Activated CD8-positive, alpha-beta T cell treated with anti-CD3 and anti-CD28 coated beads for 36 hours (primary cell): ENCODE measurements at regions of chr9 and their contacts with region 1.

Region 1: DNA sequence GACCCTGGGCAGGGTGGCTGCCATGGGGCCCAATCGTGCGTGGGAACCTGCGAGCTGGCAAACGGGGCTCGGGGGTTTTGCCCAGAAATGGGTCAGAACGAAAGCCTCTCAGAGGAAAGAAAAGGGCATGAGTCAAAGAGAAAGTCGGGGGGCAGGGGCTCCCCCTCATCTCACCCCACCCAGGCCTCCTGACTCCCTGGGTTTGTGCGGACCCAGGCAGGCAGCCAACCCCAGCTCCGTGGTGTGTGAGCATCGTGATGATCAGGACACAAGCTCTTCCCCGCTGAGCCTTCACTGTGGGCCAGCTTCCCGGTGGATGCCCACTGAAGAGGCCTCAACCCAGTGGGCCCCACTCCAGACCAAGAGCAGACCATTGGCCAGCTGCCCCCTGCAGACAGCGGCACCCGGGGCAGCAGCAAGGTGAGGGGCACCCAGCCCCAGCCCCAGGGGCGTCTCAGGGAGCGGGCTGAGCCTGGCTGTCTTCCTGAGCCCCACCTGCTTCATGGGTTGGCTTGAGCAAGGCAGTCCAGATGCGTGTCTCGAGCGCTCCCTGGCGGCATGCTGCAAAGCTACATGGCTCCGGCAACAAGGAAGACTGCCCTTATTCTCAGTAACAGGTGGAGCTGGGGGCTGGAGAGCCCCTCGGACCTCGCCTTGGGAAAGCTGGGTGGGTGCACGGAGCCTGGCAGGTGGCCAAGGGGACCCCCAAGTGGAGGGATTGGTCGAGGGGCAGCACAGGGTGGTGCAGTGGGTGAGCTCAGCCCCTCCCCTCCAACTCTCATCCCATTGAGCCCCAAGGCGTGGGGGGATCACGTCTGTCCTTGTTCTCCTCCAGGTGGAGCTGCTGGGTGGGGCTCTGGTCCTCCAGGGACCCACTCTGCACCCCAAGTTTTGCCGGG is 3.2 kb upstream of the FUT7 start:
- DNase-seq: peak; percentile 91
- ATAC-seq: peak; percentile 89
- H3K4me3 Mint-ChIP-seq: peak overlapping the region; percentile 47
- H3K27ac Mint-ChIP-seq: peak overlapping the region; percentile 85
- H3K4me1 Mint-ChIP-seq: peaks cover 34% of the 10 kb centered on the region
- H3K27me3 Mint-ChIP-seq: no peaks in the 10 kb centered on the region
- CTCF ChIP-seq: peak; percentile 86

Region 2: GRCh38 chr9:136790927-136791641 is 244.0 kb before region 1 on chr9 and contains the start of gene TMEM141:
- CTCF ChIA-PET with region 1: interaction called, 28 read pairs
- POLR2A ChIA-PET with region 1: interaction called, 3 read pairs
- intact Hi-C with region 1: loop called (anchors 5 kb)
- DNase-seq: peak; percentile 100
- ATAC-seq: peak; percentile 91
- H3K4me3 Mint-ChIP-seq: peak within 1 kb of the TSS; percentile 82
- H3K27ac Mint-ChIP-seq: peak within 1 kb of the TSS; percentile 86
- H3K4me1 Mint-ChIP-seq: peaks cover 31% of the 10 kb centered on the region
- H3K27me3 Mint-ChIP-seq: peaks cover 10% of the 10 kb centered on the region
- CTCF ChIP-seq: no peak
- total RNA-seq, gene TMEM141: 50.6 to 51.1 TPM

Region 3: GRCh38 chr9:136944519-136945279 is 90.4 kb before region 1 on chr9 and contains the starts of genes C8G and FBXW5:
- CTCF ChIA-PET with region 1: interaction called, 82 read pairs
- POLR2A ChIA-PET with region 1: interaction called, 7 read pairs
- intact Hi-C with region 1: no loop called
- DNase-seq: peak; percentile 93
- ATAC-seq: peak; percentile 89
- H3K4me3 Mint-ChIP-seq: peak within 1 kb of the TSS; percentile 77
- H3K27ac Mint-ChIP-seq: peak within 1 kb of the TSS; percentile 83
- H3K4me1 Mint-ChIP-seq: peaks cover 14% of the 10 kb centered on the region
- H3K27me3 Mint-ChIP-seq: no peaks in the 10 kb centered on the region
- CTCF ChIP-seq: peak; percentile 96
- total RNA-seq, gene C8G: 0.83 TPM in 1 of 2 experiments, not detected in the other
- total RNA-seq, gene FBXW5: 53.4 to 54.0 TPM

Region 4: GRCh38 chr9:136991993-136992818 is 42.9 kb before region 1 on chr9 and contains the start of gene PAXX:
- CTCF ChIA-PET with region 1: interaction called, 48 read pairs
- POLR2A ChIA-PET with region 1: interaction called, 4 read pairs
- intact Hi-C with region 1: no loop called
- DNase-seq: peak; percentile 96
- ATAC-seq: peak; percentile 92
- H3K4me3 Mint-ChIP-seq: peak within 1 kb of the TSS; percentile 86
- H3K27ac Mint-ChIP-seq: peak within 1 kb of the TSS; percentile 88
- H3K4me1 Mint-ChIP-seq: peaks cover 22% of the 10 kb centered on the region
- H3K27me3 Mint-ChIP-seq: no peaks in the 10 kb centered on the region
- CTCF ChIP-seq: no peak
- total RNA-seq, gene PAXX: 60.5 to 61.8 TPM

Region 5: DNA sequence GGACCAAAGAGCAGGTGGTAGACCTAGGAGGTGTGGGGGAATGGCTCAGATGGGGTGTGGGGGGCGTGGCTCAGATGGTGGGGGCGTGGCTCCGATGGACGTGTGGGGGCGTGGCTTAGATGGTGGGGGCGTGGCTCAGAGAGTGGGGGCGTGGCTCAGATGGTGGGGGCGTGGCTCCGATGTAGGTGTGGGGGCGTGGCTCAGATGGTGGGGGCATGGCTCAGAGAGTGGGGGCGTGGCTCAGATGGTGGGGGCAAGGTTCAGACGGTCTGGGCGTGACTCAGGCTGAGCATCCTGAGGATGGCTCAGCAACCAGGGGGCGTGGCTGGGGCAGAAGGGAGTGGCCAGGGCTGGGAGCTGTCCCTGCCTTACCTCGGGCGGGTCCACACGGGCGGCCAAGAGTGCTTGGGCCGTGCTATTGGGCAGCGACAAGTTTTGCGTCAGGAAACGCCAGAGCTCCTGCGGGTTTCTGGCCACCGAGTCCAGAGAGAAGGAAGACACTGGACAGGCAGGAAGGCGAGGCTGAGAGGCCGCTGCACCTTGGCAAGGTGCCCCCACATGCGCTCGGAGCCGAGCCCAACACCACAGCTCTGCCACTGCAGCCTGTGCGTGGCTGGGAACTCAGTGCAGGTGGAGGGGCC is 13.0 kb before region 1 on chr9:
- CTCF ChIA-PET with region 1: interaction called, 42 read pairs
- POLR2A ChIA-PET with region 1: interaction called, 9 read pairs
- intact Hi-C with region 1: no loop called
- DNase-seq: peak; percentile 91
- ATAC-seq: peak; percentile 95
- H3K4me3 Mint-ChIP-seq: no peak overlapping the region
- H3K27ac Mint-ChIP-seq: no peak overlapping the region
- H3K4me1 Mint-ChIP-seq: peaks cover 4% of the 10 kb centered on the region
- H3K27me3 Mint-ChIP-seq: no peaks in the 10 kb centered on the region
- CTCF ChIP-seq: no peak

Region 6: DNA sequence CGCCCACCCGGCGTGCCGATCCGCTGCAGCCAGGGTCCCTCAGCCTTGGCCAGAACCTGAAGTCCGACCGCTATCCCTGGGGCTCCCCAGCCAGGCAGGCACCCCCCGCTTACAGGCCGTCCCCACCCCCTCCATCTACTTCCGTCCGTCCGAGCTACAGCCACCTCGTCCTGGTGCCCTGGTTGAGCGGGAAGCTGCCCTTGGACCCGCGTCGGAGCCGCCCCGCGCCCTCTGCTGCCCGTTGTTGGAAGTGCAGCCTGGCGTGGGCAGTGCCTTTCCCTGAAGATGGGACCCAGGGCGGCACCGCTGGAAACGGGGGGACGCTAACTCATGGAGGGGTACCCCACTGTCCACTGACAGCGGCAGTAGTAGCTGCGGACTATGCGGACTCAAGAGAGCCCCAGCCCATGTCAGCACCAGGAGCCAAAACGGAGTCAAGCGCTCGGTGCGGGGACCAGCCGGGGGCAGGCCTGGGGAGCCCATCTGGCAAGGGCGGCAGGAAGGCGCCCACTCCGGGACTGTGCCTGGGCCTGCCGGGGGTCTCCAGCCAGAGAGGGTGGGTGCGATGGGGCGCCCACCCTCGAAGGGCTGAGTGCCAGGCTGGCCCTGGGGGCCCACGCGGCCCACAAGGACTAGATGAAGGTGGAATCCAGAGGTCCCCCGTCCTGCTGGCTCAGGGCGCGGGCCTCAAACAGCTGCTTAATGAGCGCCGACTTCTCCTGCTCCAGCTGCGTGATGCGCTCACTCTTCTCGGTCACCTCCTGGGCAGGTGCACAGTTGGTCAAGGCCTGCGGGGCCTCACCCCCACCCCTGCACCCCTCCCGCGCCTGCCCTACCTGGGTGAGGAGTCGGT is 29.1 kb after region 1 on chr9:
- CTCF ChIA-PET with region 1: interaction called, 109 read pairs
- POLR2A ChIA-PET with region 1: interaction called, 7 read pairs
- intact Hi-C with region 1: no loop called
- DNase-seq: peak; percentile 68
- ATAC-seq: peak; percentile 35
- H3K4me3 Mint-ChIP-seq: no peak overlapping the region
- H3K27ac Mint-ChIP-seq: no peak overlapping the region
- H3K4me1 Mint-ChIP-seq: peaks cover 7% of the 10 kb centered on the region
- H3K27me3 Mint-ChIP-seq: peaks cover 1% of the 10 kb centered on the region
- CTCF ChIP-seq: peak; percentile 98

Region 7: DNA sequence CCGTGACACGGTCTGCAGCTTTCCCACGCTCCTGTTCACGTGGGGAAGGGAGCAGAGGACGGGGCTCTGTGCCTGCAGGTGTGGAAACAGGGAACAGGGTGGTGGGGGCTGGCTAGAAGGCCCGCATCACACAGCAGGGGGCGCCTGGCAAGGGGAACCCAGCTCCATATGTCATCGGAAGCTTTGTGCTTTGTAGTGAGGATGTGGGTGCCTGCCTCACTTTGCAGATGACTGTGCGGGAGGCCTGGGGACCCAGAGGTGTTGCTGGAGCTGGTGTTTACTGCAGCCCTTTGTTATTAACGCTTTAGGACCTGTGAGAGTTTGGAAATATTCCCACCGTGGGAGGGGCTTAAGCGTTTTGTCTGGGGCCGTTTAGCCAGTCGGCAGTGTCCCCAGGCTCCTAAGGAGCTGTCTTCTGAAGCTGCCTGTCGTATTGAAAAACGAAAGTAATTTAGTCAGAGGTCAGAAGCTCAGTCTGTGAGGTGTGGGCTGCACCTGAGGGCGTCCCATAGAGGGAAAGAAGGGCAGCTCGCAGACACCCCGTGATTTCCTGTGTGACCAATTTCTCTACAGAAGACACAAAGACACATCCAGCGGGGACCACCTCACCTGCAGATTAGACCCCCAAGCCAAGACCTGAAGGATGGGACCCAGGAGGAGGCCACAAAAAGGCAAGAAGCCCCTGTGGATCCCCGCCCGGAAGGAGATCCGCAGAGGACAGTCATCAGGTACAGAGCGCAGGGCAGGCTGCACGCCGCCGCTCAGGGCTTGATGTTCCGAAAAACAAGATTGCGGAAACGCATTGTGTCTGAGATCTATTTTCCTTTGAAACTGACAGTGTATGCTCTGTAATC is 60.8 kb after region 1 on chr9:
- CTCF ChIA-PET with region 1: interaction called, 14 read pairs
- POLR2A ChIA-PET with region 1: no interaction called
- intact Hi-C with region 1: no loop called
- DNase-seq: peak; percentile 95
- ATAC-seq: peak; percentile 97
- H3K4me3 Mint-ChIP-seq: peak overlapping the region; percentile 78
- H3K27ac Mint-ChIP-seq: peak overlapping the region; percentile 91
- H3K4me1 Mint-ChIP-seq: peaks cover 23% of the 10 kb centered on the region
- H3K27me3 Mint-ChIP-seq: no peaks in the 10 kb centered on the region
- CTCF ChIP-seq: peak; percentile 74